ENCODE measurements at regions of chr7 and their contacts with region 1.

Region 1: GRCh38 chr7:135335628-135336139 is 102.0 kb downstream of the STRA8 start:
- DNase-seq: peak; percentile 83
- H3K27ac ChIP-seq: peak overlapping the region; percentile 37
- CTCF ChIP-seq: no peak; the same call in 1 of the 2 replicates

Region 2: DNA sequence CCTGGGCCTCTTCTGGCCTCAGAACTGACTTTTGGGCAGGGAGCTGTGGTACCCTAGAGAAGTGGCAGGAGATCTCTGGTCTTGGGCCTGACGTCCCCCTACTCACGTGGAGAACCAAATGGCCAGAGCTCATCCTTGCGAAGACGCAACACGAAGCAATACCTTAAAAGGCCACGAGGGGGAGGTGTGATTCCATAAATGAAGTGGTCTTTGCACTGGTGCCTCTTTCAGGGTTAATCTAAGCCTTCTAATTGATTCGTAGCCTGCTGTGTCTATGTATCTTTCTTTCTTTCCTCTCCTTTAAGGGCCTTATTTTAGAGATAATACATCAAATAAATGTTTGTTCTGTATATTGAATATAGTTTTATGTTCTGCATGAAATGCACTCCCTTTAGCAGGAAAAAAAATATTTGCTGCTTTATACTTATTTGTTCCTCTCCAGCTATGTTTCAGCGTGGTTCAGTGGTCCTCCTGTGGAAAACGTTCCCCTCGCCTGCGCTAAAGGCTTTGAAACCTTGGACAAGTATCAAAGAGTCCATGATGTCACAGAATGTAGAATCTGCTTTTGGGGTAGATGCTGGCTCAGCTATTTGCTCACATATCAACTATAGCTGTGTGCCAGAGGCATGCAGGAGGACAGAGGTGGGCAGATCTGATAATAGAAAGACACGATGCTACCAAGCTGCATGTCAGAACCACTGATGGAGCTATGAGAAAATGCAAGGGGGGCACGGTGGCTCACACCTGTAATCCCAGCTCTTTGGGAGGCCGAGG is 61.0 kb before region 1 on chr7:
- CTCF ChIA-PET with region 1: interaction called, 12 read pairs
- POLR2A ChIA-PET with region 1: no interaction called
- DNase-seq: peak; percentile 50
- H3K27ac ChIP-seq: no peak overlapping the region
- CTCF ChIP-seq: peak; percentile 92

Region 3: DNA sequence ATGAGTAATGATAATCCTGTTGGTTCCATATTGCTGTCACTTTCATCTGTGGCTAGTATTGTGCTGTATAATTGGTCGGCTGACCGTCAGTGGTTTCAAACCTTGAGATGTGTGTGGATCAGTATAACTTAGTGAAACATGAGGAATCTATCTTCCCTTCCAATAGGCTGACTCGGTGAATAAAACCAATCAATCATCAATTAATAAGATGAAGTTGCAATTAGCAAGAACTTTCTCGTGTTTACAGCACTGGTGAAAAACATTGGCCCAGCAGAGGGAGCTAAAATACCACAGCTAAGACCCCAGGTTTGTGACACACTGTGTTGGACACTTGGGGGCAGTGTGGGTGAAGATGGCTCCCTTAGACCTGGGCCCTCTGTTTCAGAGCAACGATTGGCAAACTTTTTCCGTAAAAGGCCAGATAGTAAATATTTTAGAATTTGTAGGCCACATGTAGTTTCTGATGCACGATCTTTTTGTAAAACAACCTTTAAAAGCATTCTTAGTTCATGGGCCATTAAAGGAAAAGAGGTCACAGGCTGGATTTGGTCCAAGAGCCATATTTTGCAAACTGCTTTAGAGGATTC is 54.2 kb before region 1 on chr7:
- CTCF ChIA-PET with region 1: interaction called, 21 read pairs
- POLR2A ChIA-PET with region 1: no interaction called
- DNase-seq: peak; percentile 78
- H3K27ac ChIP-seq: no peak overlapping the region
- CTCF ChIP-seq: peak; percentile 99

Measured in RWPE1 (cell line).